ENCODE measurements at regions of chr6 and their contacts with region 1.

Region 1: GRCh38 chr6:57267586-57268293 is 45.6 kb upstream of the RAB23 start:
- DNase-seq: peak in 7 of 9 donors; percentile 2 to 38 (median 29)
- ATAC-seq: peak; percentile 54
- H3K4me3 ChIP-seq: no peak overlapping the region
- H3K4me3 Mint-ChIP-seq: no peak overlapping the region
- H3K27ac ChIP-seq: no peak overlapping the region
- H3K27ac Mint-ChIP-seq: no peak overlapping the region
- H3K4me1 ChIP-seq: no peaks in the 10 kb centered on the region
- H3K4me1 Mint-ChIP-seq: no peaks in the 10 kb centered on the region
- H3K27me3 ChIP-seq: no peaks in the 10 kb centered on the region
- H3K27me3 Mint-ChIP-seq: peaks cover 0 to 15% (median 6%) of the 10 kb centered on the region in 5 donors

Region 2: DNA sequence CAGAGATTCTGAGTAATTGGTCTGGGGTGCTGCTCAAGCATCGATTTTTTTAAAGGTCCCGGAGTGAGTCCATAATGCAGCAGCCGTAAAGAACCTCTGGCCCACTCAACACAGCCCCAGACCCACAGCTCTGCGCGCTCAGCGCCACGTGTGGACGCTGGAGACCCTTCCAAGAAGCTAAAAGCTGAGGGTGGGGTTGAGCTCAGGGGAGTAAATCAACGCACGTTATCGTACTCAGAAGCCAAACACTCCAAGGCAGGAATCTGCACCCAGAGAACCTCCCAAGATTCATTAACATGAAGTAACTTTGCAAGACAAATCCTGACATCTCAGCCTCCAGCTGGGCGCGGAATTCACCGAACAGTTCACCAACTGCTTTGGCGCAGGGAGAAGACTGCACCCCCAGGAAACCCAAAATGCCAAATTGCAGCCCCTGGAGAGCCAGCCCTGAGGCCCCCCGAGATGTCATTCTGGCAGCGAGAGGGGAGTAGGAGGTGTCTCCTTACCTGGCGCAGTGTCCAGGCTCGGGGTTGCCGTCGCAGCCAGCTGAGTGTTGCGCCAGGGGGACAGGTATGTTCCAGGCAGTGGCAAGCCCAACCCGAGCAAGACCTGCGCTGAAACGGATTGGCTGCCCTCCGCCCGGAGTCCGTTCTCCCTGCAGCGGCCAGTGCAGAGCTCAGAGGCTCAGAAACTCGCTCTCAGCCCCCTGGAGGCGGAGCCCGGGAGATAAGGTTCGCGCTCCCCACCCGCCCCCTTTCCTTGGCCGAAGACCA is 1020.7 kb before region 1 on chr6 and contains the start of gene COL21A1:
- CTCF ChIA-PET with region 1: no interaction called
- POLR2A ChIA-PET with region 1: no interaction called
- intact Hi-C with region 1: no loop called
- DNase-seq: no peak
- ATAC-seq: no peak
- H3K4me3 ChIP-seq: no peak within 1 kb of the TSS
- H3K4me3 Mint-ChIP-seq: no peak within 1 kb of the TSS
- H3K27ac ChIP-seq: no peak within 1 kb of the TSS
- H3K27ac Mint-ChIP-seq: no peak within 1 kb of the TSS
- H3K4me1 ChIP-seq: no peaks in the 10 kb centered on the region
- H3K4me1 Mint-ChIP-seq: peaks cover 0 to 3% (median 0%) of the 10 kb centered on the region in 7 donors
- H3K27me3 ChIP-seq: no peaks in the 10 kb centered on the region
- H3K27me3 Mint-ChIP-seq: peaks cover 4 to 18% (median 8%) of the 10 kb centered on the region in 5 donors
- total RNA-seq, gene COL21A1: not detected

Region 3: DNA sequence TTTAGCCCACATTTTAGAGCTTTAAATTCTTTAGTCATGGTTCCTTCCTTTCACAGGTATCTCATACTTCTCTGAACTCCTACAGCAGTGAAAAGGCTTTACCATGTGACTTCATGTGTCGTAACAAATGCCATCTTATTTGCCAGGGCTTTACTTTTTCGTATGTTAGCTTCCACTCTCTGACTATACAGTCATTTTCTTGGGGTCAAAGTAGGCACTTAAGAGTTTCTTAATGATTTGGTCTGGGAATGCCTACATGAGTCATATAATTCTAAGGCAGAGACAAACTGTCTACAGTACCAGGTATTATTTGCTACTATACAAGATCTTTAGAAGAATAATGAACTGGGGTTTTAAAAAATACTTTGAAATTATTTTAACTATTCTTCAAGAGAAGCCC is 60.6 kb before region 1 on chr6:
- CTCF ChIA-PET with region 1: no interaction called
- POLR2A ChIA-PET with region 1: no interaction called
- intact Hi-C with region 1: loop called in 1 of 2 experiments (anchors 10 kb)
- DNase-seq: no peak
- ATAC-seq: no peak
- H3K4me3 ChIP-seq: no peak overlapping the region
- H3K4me3 Mint-ChIP-seq: no peak overlapping the region
- H3K27ac ChIP-seq: no peak overlapping the region
- H3K27ac Mint-ChIP-seq: no peak overlapping the region
- H3K4me1 ChIP-seq: no peaks in the 10 kb centered on the region
- H3K4me1 Mint-ChIP-seq: peaks cover 0 to 6% (median 3%) of the 10 kb centered on the region in 7 donors
- H3K27me3 ChIP-seq: no peaks in the 10 kb centered on the region
- H3K27me3 Mint-ChIP-seq: no peaks in the 10 kb centered on the region

Region 4: DNA sequence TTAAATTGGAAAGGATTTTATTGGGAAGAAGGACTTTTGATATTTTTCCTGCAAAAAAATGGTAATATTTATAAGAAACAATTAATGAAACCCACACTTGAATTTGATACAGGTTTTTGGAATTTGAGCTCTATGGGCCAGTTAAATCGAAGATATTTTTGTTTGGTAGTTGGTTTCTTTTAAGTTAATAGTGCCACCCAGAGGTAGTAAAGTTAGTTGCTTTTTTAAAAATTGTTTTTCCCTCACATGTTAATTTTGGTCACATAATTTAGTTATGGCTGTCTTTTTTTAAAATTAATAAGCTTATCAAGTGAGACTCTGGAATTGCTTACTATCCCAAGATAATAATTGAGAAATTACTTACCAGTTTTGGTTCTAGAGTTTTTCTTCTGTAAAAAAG is 56.8 kb after region 1 on chr6:
- CTCF ChIA-PET with region 1: interaction called, 4 read pairs
- POLR2A ChIA-PET with region 1: no interaction called
- intact Hi-C with region 1: loop called in 1 of 2 experiments (anchors 1 kb)
- DNase-seq: peak in 5 of 9 donors; percentile 5 to 41 (median 31)
- ATAC-seq: no peak
- H3K4me3 ChIP-seq: no peak overlapping the region
- H3K4me3 Mint-ChIP-seq: no peak overlapping the region
- H3K27ac ChIP-seq: no peak overlapping the region
- H3K27ac Mint-ChIP-seq: no peak overlapping the region
- H3K4me1 ChIP-seq: no peaks in the 10 kb centered on the region
- H3K4me1 Mint-ChIP-seq: peaks cover 11 to 31% (median 20%) of the 10 kb centered on the region in 7 donors
- H3K27me3 ChIP-seq: no peaks in the 10 kb centered on the region
- H3K27me3 Mint-ChIP-seq: no peaks in the 10 kb centered on the region